ENCODE measurements at regions of chr4 and their contacts with region 1.

Region 1: DNA sequence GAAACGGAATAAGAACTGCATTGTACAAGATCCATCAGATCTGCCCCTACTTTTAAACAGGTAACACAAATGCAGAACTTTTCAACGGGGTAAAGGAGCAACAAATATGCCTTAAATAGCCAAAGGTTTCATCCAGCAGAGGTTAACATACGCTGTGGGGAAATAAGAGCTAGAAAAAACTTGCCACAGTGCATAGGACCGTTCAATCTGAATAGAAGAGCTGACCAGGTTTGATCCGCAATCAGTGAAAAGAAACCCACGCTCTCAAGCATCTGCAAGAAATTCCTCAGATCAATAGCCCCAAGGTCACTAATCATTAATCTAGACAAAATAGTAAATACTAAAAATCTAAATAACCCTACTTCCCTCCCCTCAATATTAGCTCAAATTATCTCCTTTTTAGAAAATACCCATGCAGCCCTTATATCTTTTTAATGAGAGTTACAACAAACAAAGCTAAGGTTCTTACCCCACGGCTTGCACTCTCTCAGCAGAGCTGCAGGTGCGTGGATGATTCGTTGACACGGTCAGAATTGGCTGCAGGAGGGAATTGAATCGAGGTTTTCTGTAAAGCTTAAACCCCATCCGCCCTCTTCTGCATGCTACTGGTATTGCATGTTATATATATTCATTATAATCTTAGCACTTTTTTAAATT is at the start of gene TLR10:
- DNase-seq: peak; percentile 46
- H3K4me3 ChIP-seq: no peak within 1 kb of the TSS
- H3K27ac ChIP-seq: no peak within 1 kb of the TSS
- H3K4me1 ChIP-seq: peaks cover 0 to 3% (median 0%) of the 10 kb centered on the region in 4 donors
- H3K27me3 ChIP-seq: no peaks in the 10 kb centered on the region
- CTCF ChIP-seq: peak; percentile 66 to 75 (median 69)
- EP300 ChIP-seq: no peak
- POLR2A ChIP-seq: no peak
- total RNA-seq, gene TLR10: 4.6 TPM in 1 of 4 donors, not detected in the others

Region 2: GRCh38 chr4:38759113-38759789 is 23.3 kb before region 1 on chr4:
- in situ Hi-C with region 1: no loop called
- intact Hi-C with region 1: loop called (anchors 2 kb)
- DNase-seq: peak; percentile 68
- H3K4me3 ChIP-seq: no peak overlapping the region
- H3K27ac ChIP-seq: peak overlapping the region in 2 of 4 donors; percentile 2 to 22
- H3K4me1 ChIP-seq: peaks cover 0 to 5% (median 0%) of the 10 kb centered on the region in 4 donors
- H3K27me3 ChIP-seq: no peaks in the 10 kb centered on the region
- CTCF ChIP-seq: peak; percentile 69 to 81 (median 71)
- EP300 ChIP-seq: no peak
- POLR2A ChIP-seq: no peak

Region 3: GRCh38 chr4:38967260-38968095 is 184.9 kb after region 1 on chr4:
- in situ Hi-C with region 1: no loop called
- intact Hi-C with region 1: no loop called
- DNase-seq: no peak
- H3K4me3 ChIP-seq: no peak overlapping the region
- H3K27ac ChIP-seq: peak overlapping the region; percentile 21 to 63 (median 40)
- H3K4me1 ChIP-seq: no peaks in the 10 kb centered on the region
- H3K27me3 ChIP-seq: no peaks in the 10 kb centered on the region
- CTCF ChIP-seq: no peak
- EP300 ChIP-seq: peak; percentile 35
- POLR2A ChIP-seq: no peak